Calu3 (cell line): ENCODE measurements at regions of chr1 and their contacts with region 1.

Region 1: DNA sequence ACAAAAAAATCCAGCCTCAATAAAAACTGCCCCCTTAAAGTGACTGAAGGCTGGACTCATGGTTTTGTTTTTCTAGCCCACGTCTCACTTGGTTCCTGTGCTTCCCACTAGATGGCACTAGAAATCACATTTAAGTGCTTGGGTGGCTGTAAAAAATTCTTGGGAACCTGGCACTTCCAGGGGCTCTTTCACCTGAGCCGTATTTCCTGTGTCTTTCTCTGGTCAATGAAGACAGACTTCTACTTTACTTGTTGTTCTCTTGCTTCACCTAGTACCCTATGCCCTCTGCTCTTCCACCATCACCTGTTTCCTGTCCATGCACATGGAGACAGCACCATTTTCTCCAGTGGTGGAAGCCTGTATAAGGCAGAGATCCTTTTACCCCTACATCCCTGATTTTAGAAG is 20.0 kb downstream of the METTL13 start:
- DNase-seq: peak; percentile 40
- H3K4me3 Mint-ChIP-seq: no peak overlapping the region
- H3K27ac Mint-ChIP-seq: no peak overlapping the region
- H3K4me1 Mint-ChIP-seq: peaks cover 8% of the 10 kb centered on the region
- H3K27me3 Mint-ChIP-seq: no peaks in the 10 kb centered on the region
- CTCF ChIP-seq: peak; percentile 74

Region 2: GRCh38 chr1:171741872-171742576 is 59.5 kb before region 1 on chr1 and contains the start of gene VAMP4:
- CTCF ChIA-PET with region 1: no interaction called
- intact Hi-C with region 1: no loop called
- DNase-seq: peak; percentile 89
- H3K4me3 Mint-ChIP-seq: peak within 1 kb of the TSS; percentile 89
- H3K27ac Mint-ChIP-seq: peak within 1 kb of the TSS; percentile 95
- H3K4me1 Mint-ChIP-seq: peaks cover 22% of the 10 kb centered on the region
- H3K27me3 Mint-ChIP-seq: no peaks in the 10 kb centered on the region
- CTCF ChIP-seq: no peak
- total RNA-seq, gene VAMP4: 7.4 and 7.5 TPM in 2 replicates

Region 3: DNA sequence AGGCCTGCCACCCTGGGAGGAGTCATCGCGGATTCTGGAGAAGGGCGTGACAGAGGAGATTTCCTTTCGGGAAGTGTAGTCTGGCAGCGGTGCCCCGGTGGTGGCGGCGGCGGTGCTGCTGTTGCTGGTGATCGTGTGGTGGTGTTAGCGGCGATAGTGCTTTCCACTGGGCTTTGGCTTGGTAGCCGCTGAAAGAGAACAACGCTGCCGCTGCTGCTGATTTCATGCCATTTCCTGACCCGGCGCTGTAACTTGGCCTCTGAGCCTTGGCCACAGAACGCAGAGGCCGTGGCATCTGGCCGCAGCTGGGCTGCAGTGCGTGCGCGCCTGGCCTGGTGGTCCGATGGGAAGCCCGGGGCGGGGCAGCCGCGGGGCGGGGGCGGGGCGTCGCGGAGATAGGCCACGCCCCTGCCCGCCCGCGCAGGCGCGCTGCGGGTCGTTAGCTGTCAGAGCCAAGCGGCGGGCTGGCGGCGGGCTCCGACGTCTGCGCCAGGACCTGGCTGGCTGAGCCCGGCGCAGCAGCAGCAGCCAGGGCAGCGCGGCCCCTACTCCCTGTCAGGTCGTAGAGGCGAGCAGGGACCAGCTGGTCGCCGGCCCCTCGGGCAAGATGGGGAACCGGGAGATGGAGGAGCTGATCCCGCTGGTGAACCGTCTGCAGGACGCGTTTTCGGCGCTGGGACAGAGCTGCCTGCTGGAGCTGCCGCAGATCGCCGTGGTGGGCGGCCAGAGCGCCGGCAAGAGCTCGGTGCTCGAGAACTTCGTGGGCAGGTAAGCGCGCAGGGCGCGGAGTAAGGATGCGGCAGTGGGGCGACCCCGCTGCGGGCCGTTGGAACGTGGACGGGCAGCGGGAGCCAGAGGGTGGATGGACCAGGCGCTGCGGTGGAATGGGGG is 39.8 kb after region 1 on chr1 and contains the start of gene DNM3:
- CTCF ChIA-PET with region 1: interaction called, 10 read pairs
- intact Hi-C with region 1: no loop called
- DNase-seq: peak; percentile 85
- H3K4me3 Mint-ChIP-seq: peak within 1 kb of the TSS; percentile 82
- H3K27ac Mint-ChIP-seq: peak within 1 kb of the TSS; percentile 51
- H3K4me1 Mint-ChIP-seq: peaks cover 21% of the 10 kb centered on the region
- H3K27me3 Mint-ChIP-seq: peaks cover 64% of the 10 kb centered on the region
- CTCF ChIP-seq: no peak
- total RNA-seq, gene DNM3: 1.2 and 1.3 TPM in 2 replicates

Region 4: GRCh38 chr1:171852272-171852671 is 50.8 kb after region 1 on chr1:
- CTCF ChIA-PET with region 1: no interaction called
- intact Hi-C with region 1: no loop called
- DNase-seq: no peak
- H3K4me3 Mint-ChIP-seq: no peak overlapping the region
- H3K27ac Mint-ChIP-seq: no peak overlapping the region
- H3K4me1 Mint-ChIP-seq: no peaks in the 10 kb centered on the region
- H3K27me3 Mint-ChIP-seq: peaks cover 11% of the 10 kb centered on the region
- CTCF ChIP-seq: no peak

Region 5: GRCh38 chr1:171984850-171985485 is 183.5 kb after region 1 on chr1:
- CTCF ChIA-PET with region 1: interaction called, 102 read pairs
- intact Hi-C with region 1: loop called (anchors 1 kb)
- DNase-seq: no peak
- H3K4me3 Mint-ChIP-seq: no peak overlapping the region
- H3K27ac Mint-ChIP-seq: no peak overlapping the region
- H3K4me1 Mint-ChIP-seq: peaks cover 14% of the 10 kb centered on the region
- H3K27me3 Mint-ChIP-seq: no peaks in the 10 kb centered on the region
- CTCF ChIP-seq: peak; percentile 89